Astrocyte of the cerebellum (primary cell): ENCODE measurements at regions of chr5 and their contacts with region 1.

Region 1: GRCh38 chr5:107526257-107526937 is 144.3 kb downstream of the EFNA5 start:
- DNase-seq: no peak
- H3K4me3 ChIP-seq: no peak overlapping the region
- CTCF ChIP-seq: no peak

Region 2: DNA sequence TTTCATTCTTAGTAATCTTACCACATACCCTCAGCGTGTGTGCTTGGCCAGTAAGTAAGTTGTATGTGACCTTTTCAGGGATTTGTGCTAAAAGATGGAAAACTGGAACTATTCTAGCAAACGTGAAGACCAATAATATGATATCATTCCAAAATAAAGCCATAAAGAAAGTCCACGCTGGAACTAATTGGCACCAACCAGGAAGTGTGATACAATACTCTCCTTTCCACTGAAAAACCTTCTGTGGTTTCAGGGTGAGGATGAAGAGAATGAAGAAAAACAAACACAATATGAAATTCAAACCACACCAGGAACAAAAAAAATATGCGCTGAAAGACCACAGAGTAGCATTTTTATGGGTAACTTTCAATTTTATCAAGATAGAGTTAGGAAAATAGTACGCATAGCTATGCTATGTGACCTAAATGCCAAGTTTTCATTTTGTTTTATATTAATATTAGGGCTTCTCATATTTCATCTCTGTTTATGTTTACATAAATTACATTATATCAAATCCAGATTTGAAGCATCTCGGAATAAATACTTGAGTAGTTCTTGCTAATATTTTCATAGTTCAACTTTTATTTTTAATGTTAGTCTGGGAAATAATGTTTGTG is 38.6 kb after region 1 on chr5:
- in situ Hi-C with region 1: loop called (anchors 5 kb)
- DNase-seq: peak; percentile 90
- H3K4me3 ChIP-seq: no peak overlapping the region
- CTCF ChIP-seq: no peak

Region 3: GRCh38 chr5:107589520-107590193 is 63.3 kb after region 1 on chr5:
- in situ Hi-C with region 1: no loop called
- DNase-seq: no peak
- H3K4me3 ChIP-seq: no peak overlapping the region
- CTCF ChIP-seq: no peak